Psoas muscle (tissue), 8 donors: ENCODE measurements at regions of chr11 and their contacts with region 1.

Region 1: DNA sequence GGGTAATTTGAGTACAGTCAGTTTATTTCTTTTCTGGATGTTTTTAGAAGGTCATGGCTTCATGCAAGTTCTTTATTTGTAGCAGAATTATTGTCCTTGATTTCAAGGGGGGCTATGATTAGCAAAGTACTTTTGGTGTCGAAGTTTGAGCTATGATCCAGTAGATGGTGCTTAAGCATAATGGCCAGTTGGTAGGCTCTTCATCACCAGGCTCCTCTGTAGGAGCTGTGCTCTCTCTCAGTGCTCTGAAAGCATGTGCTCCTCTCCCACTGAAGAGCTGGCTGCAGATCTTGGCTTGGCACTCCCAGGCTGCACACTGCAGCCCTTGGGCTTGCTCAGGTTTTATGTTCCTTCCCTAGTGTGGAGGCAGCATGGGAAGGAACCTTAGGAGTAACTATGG is 852.7 kb downstream of the LUZP2 start:
- DNase-seq: no peak
- ATAC-seq: no peak
- H3K4me3 ChIP-seq: no peak overlapping the region
- H3K27ac ChIP-seq: no peak overlapping the region
- H3K4me1 ChIP-seq: no peaks in the 10 kb centered on the region
- H3K27me3 ChIP-seq: no peaks in the 10 kb centered on the region
- CTCF ChIP-seq: no peak

Region 2: DNA sequence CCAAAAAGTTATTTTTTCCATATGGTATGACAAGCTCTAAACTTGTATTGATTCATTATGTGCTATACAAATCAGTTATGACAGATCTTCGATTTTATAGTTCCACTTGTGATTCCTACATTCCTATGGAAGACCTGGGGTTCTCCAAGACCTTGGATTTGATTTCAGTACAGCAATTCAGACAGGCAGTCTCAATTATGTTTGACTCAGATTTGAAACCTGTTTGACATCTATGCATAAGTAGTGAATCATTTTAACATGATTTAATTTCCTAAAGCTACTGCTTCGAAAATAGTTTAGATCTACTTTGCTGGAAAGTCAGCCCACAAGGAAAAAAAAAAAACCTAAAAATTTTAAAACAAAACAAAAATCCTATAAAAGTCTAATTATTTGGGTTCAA is 32.3 kb before region 1 on chr11:
- intact Hi-C with region 1: no loop called
- DNase-seq: no peak
- ATAC-seq: no peak
- H3K4me3 ChIP-seq: no peak overlapping the region
- H3K27ac ChIP-seq: no peak overlapping the region
- H3K4me1 ChIP-seq: no peaks in the 10 kb centered on the region
- H3K27me3 ChIP-seq: no peaks in the 10 kb centered on the region
- CTCF ChIP-seq: no peak

Region 3: GRCh38 chr11:25423436-25424199 is 74.1 kb after region 1 on chr11:
- intact Hi-C with region 1: no loop called
- DNase-seq: no peak
- ATAC-seq: no peak
- H3K4me3 ChIP-seq: no peak overlapping the region
- H3K27ac ChIP-seq: no peak overlapping the region
- H3K4me1 ChIP-seq: no peaks in the 10 kb centered on the region
- H3K27me3 ChIP-seq: no peaks in the 10 kb centered on the region
- CTCF ChIP-seq: no peak

Region 4: GRCh38 chr11:25576320-25576719 is 226.8 kb after region 1 on chr11:
- intact Hi-C with region 1: loop called in 1 of 2 experiments (anchors 5 kb)
- DNase-seq: no peak
- ATAC-seq: no peak
- H3K4me3 ChIP-seq: no peak overlapping the region
- H3K27ac ChIP-seq: no peak overlapping the region
- H3K4me1 ChIP-seq: no peaks in the 10 kb centered on the region
- H3K27me3 ChIP-seq: no peaks in the 10 kb centered on the region
- CTCF ChIP-seq: no peak

Region 5: GRCh38 chr11:25733777-25734176 is 384.2 kb after region 1 on chr11:
- intact Hi-C with region 1: no loop called
- DNase-seq: no peak
- ATAC-seq: no peak
- H3K4me3 ChIP-seq: no peak overlapping the region
- H3K27ac ChIP-seq: no peak overlapping the region
- H3K4me1 ChIP-seq: no peaks in the 10 kb centered on the region
- H3K27me3 ChIP-seq: no peaks in the 10 kb centered on the region
- CTCF ChIP-seq: no peak